Panc1 (cell line): ENCODE measurements at regions of chr19 and their contacts with region 1.

Region 1: DNA sequence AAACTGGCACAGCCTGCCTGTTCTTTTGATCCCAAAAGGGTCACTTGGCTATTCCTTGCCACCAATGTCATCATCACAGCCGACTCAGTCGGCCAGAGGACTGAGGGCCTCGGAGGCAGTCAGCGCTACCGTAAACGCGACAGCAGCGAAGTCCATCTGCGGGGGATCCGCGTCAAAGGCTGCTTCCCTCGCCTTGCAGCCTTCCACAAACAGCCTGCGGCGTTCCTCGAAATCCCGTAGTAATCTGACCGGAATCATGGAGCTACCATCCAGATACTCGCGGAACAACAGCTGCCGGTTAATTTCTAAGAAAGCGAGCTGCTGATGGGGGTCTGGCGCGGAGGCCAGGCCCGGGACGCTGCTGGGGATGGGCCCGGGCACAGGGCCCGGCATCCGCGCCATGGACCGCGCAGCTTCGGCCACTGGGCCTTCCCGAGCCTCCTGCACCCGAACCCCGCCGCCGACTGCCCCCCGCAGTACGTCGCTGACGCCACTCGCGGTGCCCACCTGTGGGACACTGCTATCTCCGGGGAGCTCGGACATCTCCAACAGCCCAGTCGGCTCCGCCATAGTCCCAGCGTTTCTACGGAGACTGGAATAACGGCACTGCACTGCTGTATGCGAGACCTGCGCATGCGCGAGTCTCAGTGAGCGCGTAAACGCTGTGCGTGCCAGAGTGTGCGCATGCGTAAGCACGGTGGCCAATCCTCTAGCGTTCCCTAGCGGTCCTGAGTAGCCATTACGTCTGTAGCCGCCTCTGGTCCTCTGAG is at the start of gene EID2B:
- DNase-seq: peak; percentile 100
- ATAC-seq: peak; percentile 95
- H3K4me3 ChIP-seq: peak within 1 kb of the TSS; percentile 35 to 56
- H3K27ac ChIP-seq: peak within 1 kb of the TSS; percentile 80
- H3K4me1 ChIP-seq: peaks cover 25% of the 10 kb centered on the region
- H3K27me3 ChIP-seq: no peaks in the 10 kb centered on the region
- CTCF ChIP-seq: no peak
- total RNA-seq, gene EID2B: 37.7 TPM

Region 2: GRCh38 chr19:39397360-39398296 is 134.8 kb before region 1 on chr19:
- CTCF ChIA-PET with region 1: interaction called, 18 read pairs
- POLR2A ChIA-PET with region 1: interaction called, 13 read pairs
- in situ Hi-C with region 1: no loop called
- intact Hi-C with region 1: no loop called
- DNase-seq: peak; percentile 100
- ATAC-seq: peak; percentile 78
- H3K4me3 ChIP-seq: no peak overlapping the region
- H3K27ac ChIP-seq: peak overlapping the region; percentile 75
- H3K4me1 ChIP-seq: peaks cover 51% of the 10 kb centered on the region
- H3K27me3 ChIP-seq: no peaks in the 10 kb centered on the region
- CTCF ChIP-seq: no peak

Region 3: GRCh38 chr19:39480337-39481228 is 51.8 kb before region 1 on chr19 and contains the start of gene TIMM50:
- CTCF ChIA-PET with region 1: interaction called, 134 read pairs
- POLR2A ChIA-PET with region 1: interaction called, 19 read pairs
- in situ Hi-C with region 1: no loop called
- intact Hi-C with region 1: no loop called
- DNase-seq: peak; percentile 100
- ATAC-seq: peak; percentile 96
- H3K4me3 ChIP-seq: peak within 1 kb of the TSS; percentile 39 to 55
- H3K27ac ChIP-seq: peak within 1 kb of the TSS; percentile 86
- H3K4me1 ChIP-seq: peaks cover 23% of the 10 kb centered on the region
- H3K27me3 ChIP-seq: no peaks in the 10 kb centered on the region
- CTCF ChIP-seq: no peak
- total RNA-seq, gene TIMM50: 1,837 TPM

Region 4: DNA sequence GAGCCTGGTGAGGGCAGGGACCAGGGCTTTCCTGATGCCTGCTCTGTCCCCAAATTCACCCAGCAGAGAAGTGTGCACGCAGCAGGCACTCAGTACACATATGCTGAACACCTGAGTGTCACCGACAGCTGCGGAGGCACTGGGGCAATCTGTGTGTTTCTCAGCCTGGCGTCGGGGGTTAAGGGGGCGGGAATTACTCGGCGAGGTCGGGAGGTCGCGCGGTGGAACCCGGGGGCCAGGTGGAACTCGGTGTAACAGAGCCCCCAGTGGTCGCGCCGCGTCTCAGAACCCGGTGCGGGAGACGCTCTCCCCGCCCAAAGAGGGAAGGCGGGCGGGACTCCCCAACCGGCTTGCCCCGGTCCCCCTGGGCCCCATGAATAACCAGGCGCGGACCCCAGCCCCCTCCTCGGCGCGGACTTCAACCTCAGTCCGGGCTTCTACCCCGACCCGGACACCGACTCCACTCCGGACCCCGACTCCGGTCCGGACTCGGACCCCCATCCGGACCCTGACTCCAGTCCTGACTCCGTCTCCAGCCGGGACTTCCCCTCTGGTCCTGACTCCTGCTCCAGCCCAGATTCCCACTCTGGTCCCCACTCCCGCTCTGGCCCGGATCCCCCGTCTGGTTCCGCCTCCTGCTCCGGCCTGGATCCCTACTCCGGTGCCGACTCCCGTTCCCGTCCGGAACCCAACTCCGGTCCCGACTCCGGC is 17.4 kb before region 1 on chr19 and contains the start of gene SELENOV:
- CTCF ChIA-PET with region 1: interaction called, 45 read pairs
- POLR2A ChIA-PET with region 1: interaction called, 22 read pairs
- in situ Hi-C with region 1: no loop called
- intact Hi-C with region 1: no loop called
- DNase-seq: no peak
- ATAC-seq: peak; percentile 56
- H3K4me3 ChIP-seq: peak within 1 kb of the TSS; percentile 30 to 55
- H3K27ac ChIP-seq: peak within 1 kb of the TSS; percentile 5
- H3K4me1 ChIP-seq: peaks cover 26% of the 10 kb centered on the region
- H3K27me3 ChIP-seq: peaks cover 23% of the 10 kb centered on the region
- CTCF ChIP-seq: no peak
- total RNA-seq, gene SELENOV: 0.80 TPM

Region 5: GRCh38 chr19:39568604-39569003 is 36.2 kb after region 1 on chr19:
- CTCF ChIA-PET with region 1: no interaction called
- POLR2A ChIA-PET with region 1: no interaction called
- in situ Hi-C with region 1: no loop called
- intact Hi-C with region 1: no loop called
- DNase-seq: peak; percentile 83
- ATAC-seq: peak; percentile 59
- H3K4me3 ChIP-seq: no peak overlapping the region
- H3K27ac ChIP-seq: no peak overlapping the region
- H3K4me1 ChIP-seq: 0 out of 2 replicates have a peak, but pooled peaks cover 5% of the 10 kb centered on the region
- H3K27me3 ChIP-seq: peaks cover 85% of the 10 kb centered on the region
- CTCF ChIP-seq: no peak

Region 6: DNA sequence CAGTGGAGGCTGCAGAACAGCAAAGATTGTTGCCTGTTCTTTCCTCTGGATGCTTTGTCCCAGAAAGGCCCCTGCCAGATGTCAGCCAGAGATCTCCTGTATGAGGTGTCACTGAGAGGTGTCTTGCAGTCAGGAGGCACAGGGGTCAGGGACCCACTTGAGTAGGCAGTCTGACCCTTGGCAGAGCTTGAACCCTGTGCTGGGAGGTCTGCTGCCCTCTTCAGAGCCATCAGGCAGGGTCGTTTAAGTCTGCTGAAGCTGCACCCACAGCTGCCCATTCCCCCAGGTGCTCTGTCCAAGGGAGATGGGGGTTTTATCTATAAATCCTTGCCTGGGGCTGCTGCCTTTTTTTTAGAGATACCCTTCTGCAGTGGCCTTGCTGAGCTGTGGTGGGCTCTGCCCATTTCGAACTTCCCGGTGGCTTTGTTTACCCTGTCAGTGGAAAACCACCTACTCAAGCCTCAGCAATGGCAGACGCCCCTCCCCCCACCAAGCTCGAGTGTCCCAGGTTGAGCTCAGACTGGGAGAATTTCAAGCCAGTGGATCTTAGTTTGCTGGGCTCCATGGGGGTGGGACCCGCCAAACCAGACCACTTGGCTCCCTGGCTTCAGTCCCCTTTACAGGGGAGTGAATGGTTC is 91.4 kb after region 1 on chr19:
- CTCF ChIA-PET with region 1: interaction called, 10 read pairs
- POLR2A ChIA-PET with region 1: no interaction called
- in situ Hi-C with region 1: no loop called
- intact Hi-C with region 1: no loop called
- DNase-seq: no peak
- ATAC-seq: no peak
- H3K4me3 ChIP-seq: no peak overlapping the region
- H3K27ac ChIP-seq: no peak overlapping the region
- H3K4me1 ChIP-seq: no peaks in the 10 kb centered on the region
- H3K27me3 ChIP-seq: peaks cover 60% of the 10 kb centered on the region
- CTCF ChIP-seq: no peak

Region 7: DNA sequence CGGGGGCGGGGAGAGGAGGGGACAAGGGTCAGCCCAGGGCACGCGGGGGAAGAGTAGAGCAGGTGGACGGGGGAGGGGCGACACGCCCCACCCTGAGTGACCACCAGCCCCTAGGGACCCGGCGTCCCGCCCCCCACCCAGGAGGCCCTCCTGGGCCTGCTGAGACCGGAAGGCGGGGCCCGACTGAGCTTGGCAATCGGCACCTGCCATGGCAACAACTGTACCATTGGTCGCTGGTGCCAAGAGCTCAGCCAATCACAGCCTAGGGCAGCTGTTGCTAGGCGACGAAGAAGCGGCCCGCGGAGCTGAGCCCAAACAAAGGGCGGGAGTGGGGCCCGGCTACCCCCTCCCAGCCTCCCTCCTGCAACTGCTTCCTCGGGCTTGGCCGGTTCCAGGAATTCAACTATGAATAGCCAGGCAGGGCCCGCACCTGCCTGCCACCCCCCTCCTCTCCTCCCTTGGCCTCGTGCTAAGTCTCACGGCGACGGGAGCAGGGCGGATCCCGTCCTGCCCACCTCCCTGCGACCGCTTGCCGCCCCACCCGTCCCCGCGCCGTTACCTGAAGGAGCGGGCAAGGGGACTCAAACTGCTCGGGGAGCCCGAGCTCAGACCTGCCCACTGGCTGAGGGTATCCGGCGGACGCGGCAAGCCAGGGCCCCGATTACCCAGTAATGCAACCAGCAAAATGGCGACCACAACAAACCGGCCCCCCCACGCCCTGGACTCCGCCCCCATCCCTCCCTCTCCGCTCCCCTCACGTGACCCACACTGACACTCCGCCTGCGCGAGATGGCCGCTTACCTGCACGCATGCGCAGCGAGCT is 301.3 kb after region 1 on chr19 and contains the start of gene DYRK1B:
- CTCF ChIA-PET with region 1: interaction called, 9 read pairs
- POLR2A ChIA-PET with region 1: interaction called, 17 read pairs
- in situ Hi-C with region 1: no loop called
- intact Hi-C with region 1: no loop called
- DNase-seq: peak; percentile 100
- ATAC-seq: peak; percentile 94
- H3K4me3 ChIP-seq: peak within 1 kb of the TSS; percentile 36 to 57
- H3K27ac ChIP-seq: peak within 1 kb of the TSS; percentile 76
- H3K4me1 ChIP-seq: peaks cover 26% of the 10 kb centered on the region
- H3K27me3 ChIP-seq: no peaks in the 10 kb centered on the region
- CTCF ChIP-seq: no peak
- total RNA-seq, gene DYRK1B: 322 TPM